Transverse colon (tissue), 4 donors: ENCODE measurements at regions of chr12 and their contacts with region 1.

Region 1: DNA sequence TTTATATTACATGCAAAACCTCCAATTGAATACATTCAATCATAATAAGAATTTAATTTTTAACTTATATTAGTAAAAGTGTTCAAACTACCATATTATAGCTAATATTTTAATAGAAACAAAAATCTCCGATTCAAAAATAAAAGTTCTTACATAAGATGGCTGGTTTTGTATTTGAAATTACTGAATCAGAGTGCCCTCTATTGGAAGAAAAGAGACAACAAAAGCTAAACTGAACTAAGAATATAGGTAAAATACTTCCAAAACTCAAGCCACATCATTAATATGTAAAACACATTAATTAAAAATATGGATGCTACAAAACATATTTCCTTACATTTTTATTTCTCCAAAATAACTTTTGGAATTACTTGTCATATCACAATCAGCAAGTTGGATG is 120.3 kb downstream of the GARIN6 start:
- DNase-seq: no peak
- H3K4me3 ChIP-seq: no peak overlapping the region
- H3K27ac ChIP-seq: no peak overlapping the region
- H3K4me1 ChIP-seq: no peaks in the 10 kb centered on the region
- H3K27me3 ChIP-seq: no peaks in the 10 kb centered on the region
- CTCF ChIP-seq: peak in 4 of 5 experiments; percentile 19 to 36 (median 34)
- EP300 ChIP-seq: no peak
- POLR2A ChIP-seq: no peak

Region 2: GRCh38 chr12:99043319-99043914 is 724.4 kb before region 1 on chr12:
- in situ Hi-C with region 1: loop called in 2 of 4 experiments (anchors 25 kb)
- intact Hi-C with region 1: no loop called
- DNase-seq: peak; percentile 37
- H3K4me3 ChIP-seq: no peak overlapping the region
- H3K27ac ChIP-seq: no peak overlapping the region
- H3K4me1 ChIP-seq: no peaks in the 10 kb centered on the region
- H3K27me3 ChIP-seq: no peaks in the 10 kb centered on the region
- CTCF ChIP-seq: peak; percentile 51 to 79 (median 73)
- EP300 ChIP-seq: no peak
- POLR2A ChIP-seq: no peak